ENCODE measurements at regions of chr1 and their contacts with region 1.

Region 1: DNA sequence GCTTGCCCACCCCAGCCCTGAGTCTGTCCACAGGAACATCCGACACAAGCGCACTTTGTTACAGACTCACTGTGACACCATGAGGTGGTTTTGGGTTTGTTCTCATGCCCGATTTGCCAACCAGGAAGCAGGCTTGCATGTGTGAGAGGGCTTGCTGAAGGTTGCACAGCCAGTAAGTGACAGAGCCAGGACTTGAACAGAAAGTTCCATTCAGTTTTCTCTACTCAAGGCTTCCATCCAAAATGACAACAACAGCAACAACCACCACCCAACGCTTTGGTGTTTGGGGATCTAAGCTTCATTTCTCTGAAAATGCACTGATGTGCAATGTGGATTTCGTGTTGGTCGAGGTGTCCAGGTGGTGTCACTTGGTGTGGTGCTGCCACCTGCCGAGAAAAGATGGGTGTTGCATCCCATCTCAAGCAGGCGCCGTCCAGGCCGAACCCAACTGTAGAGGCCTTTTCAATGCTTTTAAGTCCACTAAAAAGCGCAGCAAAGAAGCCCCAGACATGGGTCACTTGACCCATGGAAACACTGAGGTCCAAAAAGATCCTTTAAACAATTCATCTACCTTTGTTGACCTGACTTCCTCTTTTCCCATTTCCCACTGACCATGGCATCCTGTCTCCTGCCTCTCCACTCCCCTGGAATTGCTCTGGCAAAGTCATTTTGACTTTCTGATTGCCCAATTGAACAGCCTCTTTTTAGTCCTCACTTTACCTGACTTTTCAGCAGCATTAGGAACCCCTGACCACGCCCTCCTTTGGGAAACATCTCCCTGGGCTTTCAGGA is 12.2 kb downstream of the CITED4 start:
- DNase-seq: peak in 1 of 2 experiments; percentile 89
- H3K4me3 ChIP-seq: no peak overlapping the region
- H3K27ac ChIP-seq: no peak overlapping the region
- H3K4me1 ChIP-seq: no peaks in the 10 kb centered on the region; a peak in 1 of 7 replicates
- H3K27me3 ChIP-seq: no peaks in the 10 kb centered on the region
- CTCF ChIP-seq: peak; percentile 85 to 97 (median 96)
- EP300 ChIP-seq: no peak
- POLR2A ChIP-seq: no peak
- RAD21 ChIP-seq: peak; percentile 89 to 90

Region 2: DNA sequence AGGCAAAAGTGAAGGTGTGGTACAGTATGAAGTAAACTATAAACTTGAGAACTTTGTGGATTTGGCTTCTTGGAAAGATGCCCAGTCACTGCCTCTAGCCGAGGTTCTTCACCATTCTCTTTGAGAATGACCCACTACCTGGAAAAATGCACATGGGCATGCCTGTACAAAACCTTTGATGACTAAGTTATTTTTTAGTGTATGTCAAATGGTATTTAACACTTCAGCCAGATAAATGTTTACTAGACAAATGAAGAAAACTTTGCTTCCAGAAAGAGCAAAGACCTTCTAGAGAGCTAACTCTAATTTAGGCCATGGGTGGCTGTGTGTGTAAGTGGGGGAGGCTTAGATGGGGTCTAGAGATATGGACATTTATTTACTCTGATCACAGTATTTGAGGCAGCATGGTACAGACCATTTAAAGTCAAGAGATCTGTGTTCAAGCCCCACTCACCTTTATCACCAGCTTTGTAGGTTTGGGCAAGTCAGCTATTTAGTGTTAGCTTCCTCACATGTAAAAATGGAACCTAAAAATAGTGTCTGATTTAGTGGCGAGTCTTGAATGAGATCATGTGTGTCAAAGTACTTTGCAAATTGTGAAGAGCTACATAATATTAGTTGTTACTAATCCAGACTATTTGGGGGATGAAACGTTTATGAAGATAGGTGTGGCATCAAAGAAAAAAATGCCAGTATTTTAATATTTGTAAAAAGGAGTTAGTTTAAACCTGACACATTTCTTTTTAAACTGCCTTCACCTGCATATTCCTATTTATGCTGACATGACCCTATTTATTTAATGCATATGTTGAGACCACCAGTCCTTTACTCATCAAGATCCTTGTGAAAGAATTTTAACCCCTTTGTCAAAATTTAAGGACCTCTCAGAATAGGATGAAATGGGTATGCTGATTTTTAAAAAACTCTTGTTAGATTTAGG is 138.3 kb before region 1 on chr1:
- CTCF ChIA-PET with region 1: no interaction called
- POLR2A ChIA-PET with region 1: no interaction called
- DNase-seq: no peak
- H3K4me3 ChIP-seq: peak overlapping the region; percentile 11 to 77 (median 48); a peak in 5 of 8 replicates
- H3K27ac ChIP-seq: no peak overlapping the region
- H3K4me1 ChIP-seq: peaks cover 0 to 7% (median 4%) of the 10 kb centered on the region in 4 experiments; a peak in 3 of 7 replicates
- H3K27me3 ChIP-seq: no peaks in the 10 kb centered on the region
- CTCF ChIP-seq: no peak
- EP300 ChIP-seq: no peak
- POLR2A ChIP-seq: no peak
- RAD21 ChIP-seq: no peak

Region 3: DNA sequence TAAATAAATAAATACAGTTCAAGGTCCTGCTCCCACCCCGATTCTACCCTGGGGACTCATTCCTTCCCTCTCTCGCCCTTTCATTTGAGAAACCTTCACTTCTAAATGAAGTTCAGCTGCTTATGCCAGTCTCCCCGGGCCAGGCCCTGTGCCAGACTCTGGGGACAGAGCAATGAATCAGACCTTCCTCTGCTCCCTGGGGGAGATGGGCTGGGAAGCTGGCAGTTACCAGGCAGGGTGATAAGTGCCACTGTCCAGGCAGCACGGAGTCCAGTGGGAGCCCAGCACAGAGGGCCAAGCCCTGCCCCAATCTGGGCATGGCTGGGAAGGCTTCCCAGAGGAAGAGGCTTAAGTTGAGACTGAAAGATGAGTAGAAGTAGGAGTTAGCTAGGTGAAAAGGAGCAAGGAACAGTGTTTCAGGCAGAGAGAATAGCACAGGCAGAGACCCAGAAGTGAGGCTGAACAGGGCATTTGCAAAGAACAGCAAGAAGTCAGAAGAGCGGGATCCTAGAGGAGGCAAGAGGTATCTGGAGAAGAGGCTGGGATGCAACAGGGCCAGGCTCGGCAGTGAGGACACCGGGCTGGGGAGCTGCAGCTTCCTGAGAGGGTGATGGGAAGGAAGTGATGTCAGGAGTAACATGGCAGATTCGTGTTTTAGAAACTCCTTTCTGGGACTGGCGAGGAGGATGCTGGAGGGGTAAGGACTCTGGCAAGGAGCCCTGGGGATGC is 52.9 kb before region 1 on chr1:
- CTCF ChIA-PET with region 1: interaction called, 20 read pairs
- POLR2A ChIA-PET with region 1: no interaction called
- DNase-seq: no peak
- H3K4me3 ChIP-seq: no peak overlapping the region
- H3K27ac ChIP-seq: no peak overlapping the region
- H3K4me1 ChIP-seq: peaks cover 4 to 16% (median 12%) of the 10 kb centered on the region in 4 experiments
- H3K27me3 ChIP-seq: peaks cover 0 to 6% (median 4%) of the 10 kb centered on the region in 4 experiments; a peak in 3 of 7 replicates
- CTCF ChIP-seq: no peak
- EP300 ChIP-seq: no peak
- POLR2A ChIP-seq: no peak
- RAD21 ChIP-seq: no peak

Region 4: DNA sequence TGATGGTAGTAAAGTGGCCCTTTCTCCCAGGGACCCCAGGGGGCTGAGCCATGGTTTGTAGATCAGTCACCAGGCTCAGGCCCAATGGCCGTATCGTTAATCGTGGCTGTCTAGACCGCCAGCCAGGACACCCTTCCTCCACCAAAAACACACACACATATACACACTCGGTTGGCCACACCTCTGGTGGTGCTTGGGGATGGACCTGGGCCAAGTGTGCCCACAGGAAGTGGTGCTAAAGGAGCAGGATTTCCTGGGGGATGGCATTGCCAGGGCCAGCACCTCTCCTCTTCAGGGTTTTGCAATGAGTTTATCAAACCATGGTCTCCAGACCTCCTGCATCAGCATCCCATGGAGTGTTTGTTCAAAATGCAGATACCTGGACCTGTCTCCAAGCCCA is 24.0 kb before region 1 on chr1:
- CTCF ChIA-PET with region 1: interaction called, 28 read pairs
- POLR2A ChIA-PET with region 1: no interaction called
- DNase-seq: no peak
- H3K4me3 ChIP-seq: no peak overlapping the region
- H3K27ac ChIP-seq: no peak overlapping the region
- H3K4me1 ChIP-seq: peaks cover 10 to 20% (median 14%) of the 10 kb centered on the region in 4 experiments
- H3K27me3 ChIP-seq: no peaks in the 10 kb centered on the region
- CTCF ChIP-seq: no peak
- EP300 ChIP-seq: no peak
- POLR2A ChIP-seq: no peak
- RAD21 ChIP-seq: no peak

Region 5: DNA sequence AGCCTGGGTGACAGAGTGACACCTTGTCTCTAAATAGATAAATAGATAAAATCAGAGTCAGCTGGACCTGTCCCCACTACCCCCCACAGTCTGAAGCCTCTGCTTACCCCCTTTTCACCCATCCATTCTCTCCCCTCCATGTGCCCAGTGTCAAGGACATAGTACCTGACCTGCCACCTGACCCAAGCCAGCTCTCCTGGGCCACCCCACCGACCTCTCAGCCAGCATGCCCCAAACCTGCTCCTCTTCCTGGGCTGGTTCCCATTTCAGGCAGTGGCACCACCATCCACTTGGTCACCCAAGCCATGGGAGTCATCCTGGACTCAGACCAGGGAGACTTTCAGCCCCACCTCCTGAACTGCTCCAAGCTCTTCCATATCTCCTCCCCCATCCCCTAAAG is 16.0 kb before region 1 on chr1:
- CTCF ChIA-PET with region 1: interaction called, 28 read pairs
- POLR2A ChIA-PET with region 1: no interaction called
- DNase-seq: no peak
- H3K4me3 ChIP-seq: no peak overlapping the region
- H3K27ac ChIP-seq: no peak overlapping the region
- H3K4me1 ChIP-seq: no peaks in the 10 kb centered on the region; a peak in 1 of 7 replicates
- H3K27me3 ChIP-seq: no peaks in the 10 kb centered on the region
- CTCF ChIP-seq: no peak
- EP300 ChIP-seq: no peak
- POLR2A ChIP-seq: no peak
- RAD21 ChIP-seq: no peak

Region 6: GRCh38 chr1:40862008-40862863 is 12.2 kb after region 1 on chr1 and contains the start of gene CITED4:
- CTCF ChIA-PET with region 1: interaction called, 64 read pairs
- POLR2A ChIA-PET with region 1: interaction called, 5 read pairs
- DNase-seq: peak; percentile 92 to 97
- H3K4me3 ChIP-seq: peak within 1 kb of the TSS; percentile 39 to 64 (median 48)
- H3K27ac ChIP-seq: peak within 1 kb of the TSS; percentile 19; the same call in 1 of the 2 replicates
- H3K4me1 ChIP-seq: peaks cover 4 to 8% (median 6%) of the 10 kb centered on the region in 4 experiments
- H3K27me3 ChIP-seq: peaks cover 0 to 20% (median 16%) of the 10 kb centered on the region in 4 experiments; a peak in 5 of 7 replicates
- CTCF ChIP-seq: peak; percentile 46 to 64 (median 58)
- EP300 ChIP-seq: no peak
- POLR2A ChIP-seq: peak; percentile 97 to 98
- RAD21 ChIP-seq: peak; percentile 70 to 78
- total RNA-seq, gene CITED4: 16.0 and 16.3 TPM in 2 replicates

Region 7: GRCh38 chr1:40877698-40878097 is 27.7 kb after region 1 on chr1:
- CTCF ChIA-PET with region 1: no interaction called
- POLR2A ChIA-PET with region 1: no interaction called
- DNase-seq: no peak
- H3K4me3 ChIP-seq: no peak overlapping the region
- H3K27ac ChIP-seq: no peak overlapping the region
- H3K4me1 ChIP-seq: peaks cover 1 to 10% (median 4%) of the 10 kb centered on the region in 4 experiments; a peak in 4 of 7 replicates
- H3K27me3 ChIP-seq: no peaks in the 10 kb centered on the region; a peak in 2 of 7 replicates
- CTCF ChIP-seq: no peak
- EP300 ChIP-seq: no peak
- POLR2A ChIP-seq: no peak
- RAD21 ChIP-seq: no peak